Aorta (tissue), 5 donors: ENCODE measurements at regions of chr10 and their contacts with region 1.

Region 1: DNA sequence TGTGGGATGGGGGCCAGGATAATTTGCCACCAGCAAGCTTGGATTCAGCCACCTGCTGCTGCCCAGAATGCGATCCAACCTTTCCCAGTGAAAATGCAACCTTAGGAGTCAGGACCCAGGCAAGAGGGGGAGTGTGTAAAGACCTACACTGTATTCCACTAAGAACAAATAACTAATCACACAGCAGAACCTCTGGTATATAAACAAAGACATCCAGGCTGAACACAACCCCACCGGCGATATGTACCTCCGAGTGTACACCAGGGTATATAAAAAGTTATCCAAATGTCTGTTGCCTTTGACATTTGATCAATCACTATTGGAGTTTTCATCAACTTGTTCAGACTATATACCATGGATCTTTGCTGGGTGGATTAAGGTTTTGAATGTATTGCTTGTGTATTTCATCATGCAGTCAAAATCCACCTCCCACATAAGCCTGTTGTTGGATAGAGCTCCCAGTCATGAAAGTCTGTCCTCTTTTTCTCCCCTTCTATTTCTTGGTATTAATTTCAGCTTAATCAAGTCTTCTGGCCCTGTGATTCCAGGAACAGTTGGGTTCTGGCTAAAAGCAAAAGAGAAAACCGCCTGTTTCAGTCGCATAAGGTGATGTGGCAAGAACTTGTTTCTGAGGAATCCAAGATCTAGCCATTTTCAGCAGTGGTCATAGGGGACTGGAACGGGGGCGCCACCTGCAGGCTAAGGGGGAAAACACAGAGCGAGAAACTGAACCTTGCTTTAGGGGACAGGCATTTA is 290.7 kb downstream of the CCDC3 start:
- DNase-seq: peak; percentile 76 to 94
- ATAC-seq: peak; percentile 85
- H3K4me3 ChIP-seq: no peak overlapping the region
- H3K27ac ChIP-seq: peak overlapping the region in 1 of 2 donors; percentile 41
- H3K4me1 ChIP-seq: peaks cover 2 to 9% of the 10 kb centered on the region in 2 donors
- H3K27me3 ChIP-seq: no peaks in the 10 kb centered on the region

Region 2: GRCh38 chr10:12221323-12222298 is 489.2 kb before region 1 on chr10:
- intact Hi-C with region 1: loop called in 1 of 2 experiments (anchors 5 kb)
- DNase-seq: no peak
- ATAC-seq: peak; percentile 44
- H3K4me3 ChIP-seq: no peak overlapping the region
- H3K27ac ChIP-seq: peak overlapping the region in 1 of 2 donors; percentile 21
- H3K4me1 ChIP-seq: peaks cover 2 to 5% of the 10 kb centered on the region in 2 donors
- H3K27me3 ChIP-seq: no peaks in the 10 kb centered on the region

Region 3: GRCh38 chr10:12264204-12264940 is 446.4 kb before region 1 on chr10:
- intact Hi-C with region 1: loop called (anchors 2 to 5 kb)
- DNase-seq: peak; percentile 87 to 93
- ATAC-seq: peak; percentile 94
- H3K4me3 ChIP-seq: no peak overlapping the region
- H3K27ac ChIP-seq: no peak overlapping the region
- H3K4me1 ChIP-seq: peaks cover 0 to 1% of the 10 kb centered on the region in 2 donors
- H3K27me3 ChIP-seq: no peaks in the 10 kb centered on the region

Region 4: DNA sequence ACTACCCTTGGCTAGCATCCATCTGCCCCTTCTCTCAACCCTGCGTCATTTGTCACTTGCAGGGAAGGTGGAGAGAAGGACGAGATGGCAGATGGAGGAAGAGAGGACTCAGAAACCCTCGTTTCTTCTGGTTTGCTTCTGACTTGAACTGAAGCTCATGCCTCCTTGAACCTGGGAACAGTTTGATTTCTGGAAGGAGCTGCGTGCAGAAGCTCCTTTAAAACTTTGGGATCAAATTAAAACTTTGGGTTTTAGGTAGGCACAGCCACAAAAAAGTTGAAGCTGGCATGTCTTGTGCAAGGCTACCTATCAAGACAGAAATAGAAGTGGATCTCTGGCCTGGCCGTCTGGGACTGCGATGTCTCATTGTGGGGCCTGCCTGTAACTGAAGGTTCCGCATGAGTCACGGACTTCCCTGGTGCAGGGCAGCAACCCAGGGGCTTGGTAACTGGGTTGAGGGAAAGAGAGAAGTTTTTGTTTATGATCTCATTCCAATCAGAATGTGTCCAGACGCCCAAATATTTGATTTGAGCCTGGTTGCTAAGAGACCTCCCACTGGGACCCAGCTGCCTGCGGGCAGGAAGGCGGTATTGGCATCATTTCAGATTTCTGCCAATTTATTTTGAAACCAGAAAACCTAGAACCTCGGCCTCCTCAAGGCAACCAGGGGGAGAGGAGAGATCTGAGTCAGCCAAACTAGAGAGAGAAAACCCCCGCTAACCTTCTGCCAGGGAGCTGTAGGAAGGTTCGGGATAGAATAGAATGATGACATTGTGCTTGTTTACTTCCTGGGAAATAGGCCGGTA is 377.2 kb before region 1 on chr10:
- intact Hi-C with region 1: loop called in 1 of 2 experiments (anchors 5 kb)
- DNase-seq: peak; percentile 90 to 91
- ATAC-seq: peak; percentile 91
- H3K4me3 ChIP-seq: no peak overlapping the region
- H3K27ac ChIP-seq: peak overlapping the region; percentile 97 to 99
- H3K4me1 ChIP-seq: peaks cover 0 to 6% of the 10 kb centered on the region in 2 donors
- H3K27me3 ChIP-seq: no peaks in the 10 kb centered on the region

Region 5: GRCh38 chr10:12348870-12349628 is 361.7 kb before region 1 on chr10 and contains the start of gene CAMK1D:
- intact Hi-C with region 1: loop called in 1 of 2 experiments (anchors 5 kb)
- DNase-seq: peak; percentile 91 to 95
- ATAC-seq: peak; percentile 89
- H3K4me3 ChIP-seq: peak within 1 kb of the TSS; percentile 86 to 96
- H3K27ac ChIP-seq: peak within 1 kb of the TSS; percentile 84 to 93
- H3K4me1 ChIP-seq: peaks cover 0 to 3% of the 10 kb centered on the region in 2 donors
- H3K27me3 ChIP-seq: no peaks in the 10 kb centered on the region
- total RNA-seq, gene CAMK1D: 10.9 to 19.0 TPM

Region 6: DNA sequence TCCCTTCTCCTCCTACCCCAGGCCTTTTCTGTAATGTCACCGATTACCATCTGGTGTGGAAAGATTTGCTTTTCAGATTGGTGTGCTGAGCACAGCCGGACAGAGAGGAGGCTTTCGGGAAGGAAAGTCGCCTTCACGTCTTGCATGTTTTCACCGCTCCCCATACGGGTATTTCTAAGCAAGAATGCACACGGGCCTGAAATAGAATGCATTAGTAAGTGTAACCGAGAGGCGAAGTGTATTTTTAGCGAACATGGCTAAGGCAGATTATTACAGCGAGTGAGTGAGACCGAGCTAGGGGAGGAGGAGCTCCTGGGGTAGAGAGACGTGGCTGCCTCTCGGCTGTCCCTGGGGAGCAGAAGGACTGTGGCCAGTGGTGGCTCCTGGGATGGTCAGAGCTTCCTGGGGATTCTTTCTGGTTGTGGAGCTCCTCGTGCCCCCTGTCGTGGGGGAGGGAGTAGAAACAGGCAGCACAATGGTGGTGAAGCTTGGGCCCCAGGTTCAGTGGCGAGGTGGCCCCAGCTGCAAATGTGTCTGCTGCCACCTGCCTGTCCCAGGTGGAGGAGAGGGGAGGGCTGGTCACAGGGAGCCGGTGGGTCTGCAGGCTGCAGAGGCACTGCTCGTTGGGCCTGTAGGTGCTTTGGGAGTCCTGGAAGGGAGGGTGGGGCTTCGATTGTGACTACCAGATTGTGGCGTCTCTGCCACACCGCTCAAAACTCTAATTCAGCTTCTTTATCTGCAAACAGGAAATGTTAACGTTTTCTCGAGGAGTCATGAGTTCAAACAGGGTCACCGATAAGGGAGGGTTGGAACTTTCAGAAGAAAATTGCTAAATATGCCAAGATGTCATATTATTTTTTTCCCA is 225.6 kb before region 1 on chr10:
- intact Hi-C with region 1: loop called in 1 of 2 experiments (anchors 10 kb)
- DNase-seq: peak; percentile 76 to 84
- ATAC-seq: peak; percentile 83
- H3K4me3 ChIP-seq: no peak overlapping the region
- H3K27ac ChIP-seq: peak overlapping the region; percentile 46 to 76
- H3K4me1 ChIP-seq: peaks cover 0 to 2% of the 10 kb centered on the region in 2 donors
- H3K27me3 ChIP-seq: no peaks in the 10 kb centered on the region

Region 7: GRCh38 chr10:12588120-12588860 is 122.5 kb before region 1 on chr10:
- intact Hi-C with region 1: no loop called
- DNase-seq: no peak
- ATAC-seq: no peak
- H3K4me3 ChIP-seq: no peak overlapping the region
- H3K27ac ChIP-seq: no peak overlapping the region
- H3K4me1 ChIP-seq: no peaks in the 10 kb centered on the region
- H3K27me3 ChIP-seq: no peaks in the 10 kb centered on the region

Region 8: DNA sequence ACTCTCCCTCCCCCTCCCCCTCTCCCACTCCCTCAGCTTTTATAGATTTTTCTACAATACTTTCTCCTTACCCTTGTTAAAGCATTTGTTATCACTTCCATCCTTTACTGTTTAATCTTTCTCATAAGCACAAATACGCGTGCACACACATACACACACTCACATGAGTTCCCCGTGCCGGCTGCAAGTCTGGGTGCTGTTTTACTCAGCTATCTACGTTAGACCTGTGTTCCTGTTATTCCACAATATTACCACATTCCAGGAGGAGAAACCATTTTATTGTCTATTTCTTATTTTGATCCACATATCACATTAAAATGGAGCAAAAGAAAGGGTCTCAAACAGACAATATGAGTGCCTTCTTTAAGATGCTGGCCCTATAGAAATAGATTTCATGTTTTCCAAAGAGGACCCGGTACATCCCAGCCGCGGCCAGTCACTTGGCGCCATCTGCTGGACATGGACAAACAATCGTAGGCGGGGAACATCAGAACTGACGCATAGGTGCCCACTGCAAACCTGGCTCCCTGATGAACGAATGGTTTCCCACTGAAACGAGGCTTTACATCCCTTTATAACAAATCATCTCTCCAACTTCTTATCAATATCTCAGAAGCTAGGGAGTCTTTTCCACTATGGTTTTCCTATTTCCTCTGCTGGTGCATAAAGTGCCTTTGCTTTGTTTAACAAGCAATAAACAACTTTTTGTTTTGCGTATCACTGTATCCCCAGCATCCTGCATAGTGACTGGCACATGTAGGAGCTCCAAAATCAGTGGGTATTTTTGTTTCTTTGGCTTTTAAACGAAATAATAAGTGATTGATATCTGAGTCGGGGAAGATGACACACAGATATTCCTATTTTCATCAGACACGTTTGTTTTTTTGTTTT is 364.0 kb after region 1 on chr10:
- intact Hi-C with region 1: loop called (anchors 5 kb)
- DNase-seq: peak; percentile 76 to 90
- ATAC-seq: peak; percentile 76
- H3K4me3 ChIP-seq: no peak overlapping the region
- H3K27ac ChIP-seq: no peak overlapping the region
- H3K4me1 ChIP-seq: no peaks in the 10 kb centered on the region
- H3K27me3 ChIP-seq: no peaks in the 10 kb centered on the region